Breast epithelium (tissue), 4 donors: ENCODE measurements at regions of chr5 and their contacts with region 1.

Region 1: DNA sequence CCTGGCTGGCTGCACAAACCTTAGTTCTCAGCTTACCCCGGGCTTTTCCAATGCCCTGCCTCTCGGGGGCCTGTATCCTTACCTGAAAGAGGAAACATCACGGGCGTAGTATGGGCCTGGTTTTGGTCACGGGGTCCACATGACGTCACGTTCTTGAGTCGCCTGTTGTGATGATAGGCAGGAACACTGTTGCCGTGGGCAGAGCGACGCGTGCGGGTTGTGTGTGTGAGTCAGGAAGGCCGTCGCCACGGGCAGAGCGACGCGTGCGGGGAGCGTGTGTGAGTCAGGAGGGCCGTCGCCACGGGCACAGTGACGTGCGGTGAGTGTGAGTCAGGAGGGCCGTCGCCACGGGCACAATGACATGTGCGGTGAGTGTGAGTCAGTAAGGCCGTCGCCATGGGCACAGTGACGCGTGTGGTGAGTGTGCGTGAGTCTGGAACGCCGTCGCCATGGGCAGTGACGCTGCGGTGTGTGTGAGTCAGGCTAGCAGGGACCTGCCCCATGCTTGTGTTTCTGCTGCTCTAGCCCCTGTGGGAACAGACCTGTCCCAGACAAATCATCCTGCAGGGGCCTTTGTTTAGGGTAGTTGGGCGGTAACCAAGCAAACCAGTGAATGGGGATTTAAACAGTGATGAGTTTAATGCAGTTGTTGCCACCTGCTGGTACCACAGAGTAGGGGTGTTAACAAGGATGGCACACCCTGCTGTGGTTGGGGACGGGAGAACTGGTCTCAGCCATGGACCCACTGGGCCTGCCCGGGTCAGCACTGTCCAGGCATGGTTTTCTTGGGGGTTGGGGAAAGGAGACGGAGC is 19.8 kb downstream of the TRIP13 start:
- DNase-seq: peak; percentile 32 to 74
- H3K4me3 ChIP-seq: no peak overlapping the region
- H3K27ac ChIP-seq: no peak overlapping the region
- H3K4me1 ChIP-seq: no peaks in the 10 kb centered on the region
- H3K27me3 ChIP-seq: no peaks in the 10 kb centered on the region
- CTCF ChIP-seq: no peak
- POLR2A ChIP-seq: no peak

Region 2: GRCh38 chr5:671459-672328 is 240.8 kb before region 1 on chr5:
- intact Hi-C with region 1: loop called (anchors 5 kb)
- DNase-seq: peak in 1 of 2 donors; percentile 82
- H3K4me3 ChIP-seq: peak overlapping the region in 2 of 3 donors; percentile 23 to 34
- H3K27ac ChIP-seq: no peak overlapping the region
- H3K4me1 ChIP-seq: peaks cover 18 to 23% of the 10 kb centered on the region in 2 donors
- H3K27me3 ChIP-seq: peaks cover 0 to 7% of the 10 kb centered on the region in 2 donors
- CTCF ChIP-seq: peak; percentile 41 to 92 (median 89)
- POLR2A ChIP-seq: no peak

Region 3: DNA sequence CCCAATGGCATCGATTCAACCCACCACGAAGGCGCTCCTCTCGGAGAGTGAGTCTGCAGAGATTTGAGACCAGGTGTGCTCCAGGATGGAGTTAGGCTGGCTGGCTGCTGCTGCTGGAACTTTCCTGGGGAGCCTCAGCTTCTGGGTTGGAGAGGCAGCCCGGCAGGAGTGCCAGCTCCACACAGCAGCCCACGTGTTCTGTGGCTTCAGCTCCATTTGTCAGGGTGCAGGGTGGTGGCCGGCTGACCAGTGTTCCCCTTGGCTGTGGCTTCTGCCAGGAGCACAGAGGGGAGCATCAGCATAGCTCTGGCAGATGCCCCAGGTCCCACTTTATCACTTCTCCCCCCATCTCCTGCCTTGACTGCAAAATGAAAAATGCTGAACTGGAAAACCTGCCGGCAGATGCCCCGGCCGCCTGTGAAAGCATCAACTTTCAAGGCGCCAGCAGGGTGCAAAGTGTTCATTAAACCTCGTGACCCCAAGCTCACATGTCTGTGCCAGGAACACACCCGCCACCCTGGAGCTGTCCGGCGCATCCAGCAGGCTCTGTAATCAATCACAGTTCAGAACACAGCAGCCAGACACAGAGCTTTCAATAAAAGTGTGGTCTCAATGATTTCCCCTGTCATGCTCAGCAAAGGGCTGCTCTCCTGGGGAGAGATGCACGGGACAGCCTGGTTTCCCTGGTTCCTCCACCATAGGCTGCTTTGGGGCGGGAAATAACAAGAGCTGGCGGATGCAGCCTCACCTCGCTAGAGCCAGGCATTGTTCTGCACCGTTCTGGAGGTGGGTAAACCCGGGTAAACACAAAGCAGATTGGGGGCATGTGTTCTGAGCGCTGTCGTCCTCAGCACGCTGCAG is 33.4 kb after region 1 on chr5:
- intact Hi-C with region 1: loop called (anchors 2 kb)
- DNase-seq: no peak
- H3K4me3 ChIP-seq: no peak overlapping the region
- H3K27ac ChIP-seq: no peak overlapping the region
- H3K4me1 ChIP-seq: peaks cover 4 to 13% of the 10 kb centered on the region in 2 donors
- H3K27me3 ChIP-seq: peaks cover 0 to 25% of the 10 kb centered on the region in 2 donors
- CTCF ChIP-seq: no peak
- POLR2A ChIP-seq: no peak

Region 4: DNA sequence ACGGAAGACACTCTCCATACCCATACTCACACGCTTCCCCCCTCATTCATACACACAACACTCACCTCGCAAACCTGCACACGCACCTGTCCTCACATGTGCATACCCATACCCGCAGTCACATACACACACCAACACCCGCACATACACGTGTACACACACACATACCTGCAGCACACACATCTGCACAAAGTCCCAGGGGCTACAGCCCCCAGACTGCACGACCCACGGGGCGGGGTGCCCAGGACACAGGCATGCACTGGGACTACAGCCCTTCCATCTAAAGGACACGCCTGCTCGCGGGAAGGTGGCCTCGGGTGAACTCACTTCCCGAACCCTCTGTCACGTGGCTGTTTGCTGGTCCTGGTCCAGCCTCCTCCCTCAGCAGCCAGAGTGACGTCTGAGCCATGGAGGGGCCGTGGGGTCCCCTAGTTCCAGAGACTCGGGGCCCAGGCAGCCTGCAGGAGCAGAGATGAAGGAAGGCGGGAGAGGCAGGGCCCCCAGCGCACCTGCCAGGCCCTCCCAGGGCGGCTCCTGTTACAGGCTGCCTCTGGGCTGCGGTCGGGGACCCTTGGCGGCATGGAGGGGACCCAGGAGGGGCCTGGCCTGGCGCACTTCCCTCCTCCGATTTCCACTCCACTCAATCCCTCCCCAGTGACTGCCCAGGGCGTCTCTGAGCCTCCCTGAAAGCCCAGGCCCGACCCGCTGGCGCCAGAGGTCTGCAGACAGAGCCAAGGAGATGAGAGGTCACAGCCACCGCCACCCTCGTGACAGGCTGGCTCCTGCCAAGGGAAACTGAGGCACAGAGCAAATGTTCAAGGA is 191.2 kb after region 1 on chr5:
- intact Hi-C with region 1: loop called (anchors 5 kb)
- DNase-seq: peak; percentile 35 to 72
- H3K4me3 ChIP-seq: peak overlapping the region in 2 of 3 donors; percentile 5 to 35
- H3K27ac ChIP-seq: peak overlapping the region; percentile 36 to 65
- H3K4me1 ChIP-seq: peaks cover 3 to 11% of the 10 kb centered on the region in 2 donors
- H3K27me3 ChIP-seq: no peaks in the 10 kb centered on the region
- CTCF ChIP-seq: no peak
- POLR2A ChIP-seq: no peak